Kidney (tissue), 22 donors: ENCODE measurements at regions of chr19 and their contacts with region 1.

Region 1: GRCh38 chr19:54179921-54180461 is 7.0 kb upstream of the TMC4 start:
- DNase-seq: peak; percentile 84 to 95 (median 94)
- H3K4me3 ChIP-seq: no peak overlapping the region
- H3K27ac ChIP-seq: no peak overlapping the region
- H3K4me1 ChIP-seq: peaks cover 0 to 4% (median 0%) of the 10 kb centered on the region in 3 donors
- H3K27me3 ChIP-seq: no peaks in the 10 kb centered on the region
- CTCF ChIP-seq: peak; percentile 37

Region 2: GRCh38 chr19:54231077-54231931 is 51.3 kb after region 1 on chr19:
- intact Hi-C with region 1: loop called (anchors 10 kb)
- DNase-seq: peak; percentile 84 to 94 (median 90)
- H3K4me3 ChIP-seq: no peak overlapping the region
- H3K27ac ChIP-seq: no peak overlapping the region
- H3K4me1 ChIP-seq: no peaks in the 10 kb centered on the region
- H3K27me3 ChIP-seq: no peaks in the 10 kb centered on the region
- CTCF ChIP-seq: peak; percentile 85

Region 3: GRCh38 chr19:54257116-54257480 is 77.1 kb after region 1 on chr19 and contains the start of gene LILRB5:
- intact Hi-C with region 1: no loop called
- DNase-seq: no peak
- H3K4me3 ChIP-seq: no peak within 1 kb of the TSS
- H3K27ac ChIP-seq: no peak within 1 kb of the TSS
- H3K4me1 ChIP-seq: no peaks in the 10 kb centered on the region
- H3K27me3 ChIP-seq: no peaks in the 10 kb centered on the region
- CTCF ChIP-seq: no peak
- total RNA-seq, gene LILRB5: 5.9 TPM